ENCODE measurements at regions of chr20 and their contacts with region 1.

Region 1: GRCh38 chr20:19841740-19842139 is 83.7 kb downstream of the RIN2 start:
- DNase-seq: no peak
- ATAC-seq: no peak
- H3K4me3 ChIP-seq: no peak overlapping the region
- H3K27ac ChIP-seq: no peak overlapping the region
- H3K4me1 ChIP-seq: no peaks in the 10 kb centered on the region
- H3K27me3 ChIP-seq: no peaks in the 10 kb centered on the region
- CTCF ChIP-seq: no peak
- POLR2A ChIP-seq: no peak
- RAD21 ChIP-seq: no peak

Region 2: GRCh38 chr20:19858466-19859371 is 17.0 kb after region 1 on chr20:
- CTCF ChIA-PET with region 1: no interaction called
- POLR2A ChIA-PET with region 1: no interaction called
- dilution Hi-C with region 1: no loop called
- in situ Hi-C with region 1: no loop called
- intact Hi-C with region 1: loop called (anchors 2 kb)
- DNase-seq: peak; percentile 33
- ATAC-seq: peak; percentile 57
- H3K4me3 ChIP-seq: no peak overlapping the region
- H3K27ac ChIP-seq: no peak overlapping the region
- H3K4me1 ChIP-seq: peaks cover 7% of the 10 kb centered on the region
- H3K27me3 ChIP-seq: no peaks in the 10 kb centered on the region
- CTCF ChIP-seq: no peak
- POLR2A ChIP-seq: no peak
- RAD21 ChIP-seq: no peak